ENCODE measurements at regions of chr16 and their contacts with region 1.

Region 1: DNA sequence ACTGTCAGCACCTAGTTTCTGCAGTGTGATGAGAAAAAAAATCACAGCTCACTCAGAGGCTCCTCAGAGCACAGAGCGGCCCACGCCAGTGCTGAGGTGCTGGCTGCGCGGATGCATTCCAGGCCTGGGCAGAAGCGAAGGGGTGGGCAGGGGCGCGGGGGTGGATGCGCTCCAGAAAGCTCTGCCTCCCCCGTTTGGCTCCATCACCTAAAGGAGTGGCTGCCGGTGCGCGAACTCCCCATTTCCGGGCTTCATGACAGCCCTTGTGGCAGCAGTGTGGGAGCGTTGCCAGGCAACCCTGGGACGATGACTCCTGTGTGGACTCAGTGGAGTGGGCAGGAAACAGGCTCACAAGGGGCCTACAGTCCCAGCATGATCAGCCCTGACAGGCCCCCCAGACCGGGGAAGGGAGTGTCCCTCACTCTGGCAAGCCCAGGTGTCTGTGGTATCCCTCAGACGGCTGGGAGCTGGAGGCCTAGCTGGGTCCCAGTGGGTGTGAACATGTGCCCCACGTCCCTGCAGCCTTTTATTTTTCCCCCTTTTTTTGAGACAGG is 32.8 kb upstream of the NUDT16L1 start:
- H3K4me3 Mint-ChIP-seq: no peak overlapping the region
- H3K27ac Mint-ChIP-seq: peak overlapping the region; percentile 93
- H3K4me1 Mint-ChIP-seq: peaks cover 69% of the 10 kb centered on the region
- H3K27me3 Mint-ChIP-seq: no peaks in the 10 kb centered on the region

Region 2: DNA sequence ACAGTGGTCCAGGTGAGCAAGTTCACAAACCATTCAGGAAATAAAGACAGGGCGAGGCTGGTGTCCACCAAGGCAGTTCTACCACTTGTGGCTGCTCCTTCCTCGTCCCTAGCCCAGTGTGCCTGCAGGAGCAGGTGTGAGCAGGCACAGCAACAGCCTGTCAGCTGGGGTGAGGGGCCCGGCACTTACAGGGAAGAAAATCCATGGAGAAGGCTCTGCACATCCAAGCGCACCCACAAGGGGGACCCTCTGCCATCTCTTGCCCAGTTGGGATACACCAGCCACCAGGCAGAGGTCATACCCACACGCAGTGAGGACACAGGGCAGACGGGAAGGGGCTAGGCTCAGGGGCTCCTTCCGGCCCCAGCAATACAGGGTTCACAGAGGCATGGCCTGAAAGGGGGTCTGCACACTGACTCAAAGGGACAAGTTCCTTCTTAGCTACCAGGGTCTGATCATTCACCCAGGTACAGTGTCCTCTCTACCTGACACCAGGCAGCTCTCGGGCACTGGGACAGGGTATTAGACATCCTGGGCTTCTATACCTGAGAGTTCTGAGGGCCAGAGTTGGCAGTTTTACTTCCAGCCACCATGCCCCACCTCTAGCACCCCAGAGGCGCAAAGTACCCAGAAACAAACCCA is 149.0 kb before region 1 on chr16:
- intact Hi-C with region 1: loop called (anchors 10 kb)
- H3K4me3 Mint-ChIP-seq: peak overlapping the region; percentile 10
- H3K27ac Mint-ChIP-seq: peak overlapping the region; percentile 89
- H3K4me1 Mint-ChIP-seq: peaks cover 76% of the 10 kb centered on the region
- H3K27me3 Mint-ChIP-seq: no peaks in the 10 kb centered on the region

Region 3: GRCh38 chr16:4624015-4624826 is 36.3 kb before region 1 on chr16 and contains the start of gene MGRN1:
- intact Hi-C with region 1: loop called (anchors 5 kb)
- H3K4me3 Mint-ChIP-seq: peak within 1 kb of the TSS; percentile 98
- H3K27ac Mint-ChIP-seq: peak within 1 kb of the TSS; percentile 97
- H3K4me1 Mint-ChIP-seq: peaks cover 56% of the 10 kb centered on the region
- H3K27me3 Mint-ChIP-seq: no peaks in the 10 kb centered on the region

Region 4: DNA sequence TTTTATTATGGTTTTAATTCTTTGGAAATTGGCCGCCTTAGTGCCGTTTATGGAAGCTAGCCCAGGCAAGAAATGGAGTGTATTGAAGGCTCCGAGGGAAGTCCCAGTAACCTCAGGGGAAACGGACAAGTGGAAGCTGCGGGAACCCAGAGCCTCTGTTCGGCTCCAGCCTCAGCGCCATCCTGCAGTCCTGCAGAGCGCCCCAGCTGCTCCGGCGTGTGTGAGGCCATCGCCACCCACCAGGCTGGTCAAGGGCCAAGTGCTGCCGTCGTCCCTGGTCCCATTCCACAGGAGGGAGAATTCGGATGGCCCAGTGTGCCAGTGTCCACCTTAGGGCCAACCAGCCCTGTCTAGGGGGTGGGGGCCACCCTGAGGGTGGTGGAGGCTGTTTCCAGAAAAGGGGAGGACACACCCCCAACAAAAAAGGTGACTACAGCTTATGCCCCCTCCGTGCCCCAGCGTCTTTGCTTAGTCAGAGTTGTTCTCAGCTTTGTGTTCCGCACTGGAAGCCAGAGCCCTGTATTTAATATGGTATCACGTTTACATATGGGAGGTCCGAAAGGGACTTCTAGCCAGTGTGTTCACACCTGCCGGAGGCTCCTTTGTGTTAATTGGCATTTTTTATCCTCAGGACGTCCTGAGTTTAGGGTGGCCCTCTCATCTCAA is 22.9 kb before region 1 on chr16:
- intact Hi-C with region 1: no loop called
- H3K4me3 Mint-ChIP-seq: no peak overlapping the region
- H3K27ac Mint-ChIP-seq: peak overlapping the region; percentile 42
- H3K4me1 Mint-ChIP-seq: peaks cover 61% of the 10 kb centered on the region
- H3K27me3 Mint-ChIP-seq: no peaks in the 10 kb centered on the region

Region 5: DNA sequence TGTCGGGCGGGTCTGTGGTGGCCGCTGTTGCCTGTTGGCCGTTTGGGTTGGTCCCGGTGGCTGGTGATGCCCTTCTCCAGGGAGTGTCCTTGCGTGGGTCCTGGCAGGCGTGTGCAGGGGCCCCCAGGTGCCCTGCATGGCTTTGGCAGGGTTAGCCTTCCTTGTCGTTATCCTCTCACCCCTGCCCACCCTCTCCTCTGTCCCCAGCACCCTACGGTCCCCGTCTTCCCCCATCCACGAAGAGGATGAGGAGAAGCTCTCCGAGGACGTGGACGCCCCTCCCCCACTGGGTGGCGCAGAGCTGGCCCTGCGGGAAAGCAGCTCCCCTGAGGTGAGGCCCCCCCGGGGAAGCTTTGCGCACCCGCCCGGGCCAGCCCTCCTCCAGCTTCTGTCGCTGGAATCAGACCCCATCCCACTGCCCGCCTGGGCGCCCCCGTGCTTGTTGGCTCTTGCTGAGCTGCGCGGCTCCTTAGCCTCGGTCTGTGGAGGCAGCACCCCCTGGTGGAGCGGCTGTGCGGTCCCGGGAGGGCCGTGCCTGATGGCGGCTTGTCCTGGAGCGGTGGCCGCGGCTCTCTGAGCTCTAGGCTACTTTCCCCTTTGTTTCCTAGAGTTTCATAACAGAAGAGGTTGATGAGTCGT is 22.2 kb after region 1 on chr16:
- intact Hi-C with region 1: loop called (anchors 2 kb)
- H3K4me3 Mint-ChIP-seq: peak overlapping the region; percentile 45
- H3K27ac Mint-ChIP-seq: peak overlapping the region; percentile 64
- H3K4me1 Mint-ChIP-seq: peaks cover 66% of the 10 kb centered on the region
- H3K27me3 Mint-ChIP-seq: no peaks in the 10 kb centered on the region